ENCODE measurements at regions of chr6 and their contacts with region 1.

Region 1: DNA sequence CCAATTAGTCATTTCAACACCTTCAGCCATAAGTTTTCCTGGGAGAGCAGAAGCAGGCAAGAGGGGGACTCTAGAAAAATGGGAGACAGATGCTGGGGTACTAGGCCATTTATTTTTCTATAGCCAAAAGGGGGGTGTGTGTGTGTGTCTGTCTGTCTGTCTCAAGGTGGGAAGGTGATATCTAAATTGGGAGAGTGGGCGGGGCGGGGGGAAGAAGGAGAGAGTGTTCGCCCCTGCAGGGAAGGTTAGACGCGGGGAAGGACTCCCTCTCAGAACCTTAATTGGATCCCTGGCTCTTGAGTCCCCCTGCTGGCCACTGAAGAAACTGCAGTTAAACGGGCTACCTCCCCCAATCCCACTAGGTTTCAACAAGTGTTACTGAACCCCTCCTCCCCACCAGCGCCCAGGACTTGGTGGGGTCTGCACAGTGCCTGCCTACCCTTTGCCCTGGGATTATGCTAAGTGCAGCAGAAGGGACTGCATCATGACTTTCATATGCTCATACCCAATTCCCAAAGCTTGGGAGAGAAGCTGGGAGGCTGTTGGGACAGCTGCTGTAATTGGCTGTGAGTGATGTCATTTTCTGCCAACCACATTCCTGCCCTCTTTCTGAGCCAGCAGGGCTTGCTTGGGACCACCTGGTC is 45.8 kb downstream of the FOXP4 start:
- DNase-seq: peak; percentile 76
- H3K4me3 Mint-ChIP-seq: no peak overlapping the region
- H3K27ac Mint-ChIP-seq: no peak overlapping the region
- H3K4me1 Mint-ChIP-seq: no peaks in the 10 kb centered on the region
- H3K27me3 Mint-ChIP-seq: no peaks in the 10 kb centered on the region
- CTCF ChIP-seq: peak; percentile 94

Region 2: GRCh38 chr6:41463062-41463930 is 128.7 kb before region 1 on chr6:
- CTCF ChIA-PET with region 1: interaction called, 10 read pairs
- POLR2A ChIA-PET with region 1: no interaction called
- intact Hi-C with region 1: loop called (anchors 1 kb)
- DNase-seq: peak; percentile 68
- H3K4me3 Mint-ChIP-seq: no peak overlapping the region
- H3K27ac Mint-ChIP-seq: no peak overlapping the region
- H3K4me1 Mint-ChIP-seq: no peaks in the 10 kb centered on the region
- H3K27me3 Mint-ChIP-seq: peaks cover 37% of the 10 kb centered on the region
- CTCF ChIP-seq: peak; percentile 43

Region 3: DNA sequence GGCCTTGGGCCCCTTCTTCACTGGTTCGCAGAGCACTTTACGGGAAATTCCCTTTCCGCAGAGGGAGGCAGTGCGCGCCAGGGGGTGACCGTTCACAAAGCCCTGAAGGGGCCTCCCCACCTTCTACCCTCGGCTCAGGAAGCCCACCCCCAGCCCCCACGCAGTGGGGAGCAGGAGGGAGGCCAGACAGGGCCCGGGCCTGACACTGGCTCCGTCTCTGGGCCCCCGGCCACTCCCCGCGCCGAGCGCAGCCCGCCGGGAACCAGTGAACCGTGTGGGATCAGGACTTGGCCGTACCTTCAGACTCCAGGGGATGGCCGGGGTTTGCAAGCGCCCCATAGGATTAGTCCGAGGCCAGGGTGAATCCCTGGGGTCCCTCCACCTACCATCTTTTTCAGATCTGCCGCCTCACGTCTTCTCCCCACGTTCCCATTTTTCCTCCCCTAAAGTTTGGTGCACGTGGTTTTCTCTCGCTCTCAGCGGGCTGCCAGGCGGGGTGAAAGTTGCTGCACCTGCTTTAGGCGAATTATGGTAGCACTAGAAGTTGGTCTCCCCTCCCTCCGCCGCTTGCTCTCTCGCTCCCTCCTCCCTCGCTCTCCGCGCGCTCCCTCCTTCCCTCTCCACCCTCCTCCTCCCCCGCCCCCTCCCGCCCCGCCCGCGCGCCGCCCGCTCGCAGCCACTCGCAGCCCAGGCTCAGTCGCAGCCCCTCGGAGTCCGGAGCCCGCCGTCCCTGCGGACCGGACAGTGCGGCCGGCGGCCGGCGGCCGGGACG is 46.1 kb before region 1 on chr6 and contains the start of gene FOXP4:
- CTCF ChIA-PET with region 1: no interaction called
- POLR2A ChIA-PET with region 1: no interaction called
- intact Hi-C with region 1: loop called (anchors 5 kb)
- DNase-seq: peak; percentile 94
- H3K4me3 Mint-ChIP-seq: peak within 1 kb of the TSS; percentile 98
- H3K27ac Mint-ChIP-seq: peak within 1 kb of the TSS; percentile 70
- H3K4me1 Mint-ChIP-seq: peaks cover 9% of the 10 kb centered on the region
- H3K27me3 Mint-ChIP-seq: no peaks in the 10 kb centered on the region
- CTCF ChIP-seq: no peak
- total RNA-seq, gene FOXP4: 16.5 and 18.4 TPM in 2 replicates

Region 4: GRCh38 chr6:41565701-41566100 is 26.3 kb before region 1 on chr6:
- CTCF ChIA-PET with region 1: no interaction called
- POLR2A ChIA-PET with region 1: no interaction called
- intact Hi-C with region 1: no loop called
- DNase-seq: no peak
- H3K4me3 Mint-ChIP-seq: no peak overlapping the region
- H3K27ac Mint-ChIP-seq: no peak overlapping the region
- H3K4me1 Mint-ChIP-seq: no peaks in the 10 kb centered on the region
- H3K27me3 Mint-ChIP-seq: no peaks in the 10 kb centered on the region
- CTCF ChIP-seq: no peak